ENCODE measurements at regions of chr19 and their contacts with region 1.

Region 1: GRCh38 chr19:40570313-40571004 is 6.2 kb upstream of the SHKBP1 start:
- H3K4me3 ChIP-seq: peak overlapping the region; percentile 35
- H3K27ac ChIP-seq: peak overlapping the region; percentile 73
- H3K4me1 ChIP-seq: peaks cover 16% of the 10 kb centered on the region
- CTCF ChIP-seq: peak; percentile 99

Region 2: DNA sequence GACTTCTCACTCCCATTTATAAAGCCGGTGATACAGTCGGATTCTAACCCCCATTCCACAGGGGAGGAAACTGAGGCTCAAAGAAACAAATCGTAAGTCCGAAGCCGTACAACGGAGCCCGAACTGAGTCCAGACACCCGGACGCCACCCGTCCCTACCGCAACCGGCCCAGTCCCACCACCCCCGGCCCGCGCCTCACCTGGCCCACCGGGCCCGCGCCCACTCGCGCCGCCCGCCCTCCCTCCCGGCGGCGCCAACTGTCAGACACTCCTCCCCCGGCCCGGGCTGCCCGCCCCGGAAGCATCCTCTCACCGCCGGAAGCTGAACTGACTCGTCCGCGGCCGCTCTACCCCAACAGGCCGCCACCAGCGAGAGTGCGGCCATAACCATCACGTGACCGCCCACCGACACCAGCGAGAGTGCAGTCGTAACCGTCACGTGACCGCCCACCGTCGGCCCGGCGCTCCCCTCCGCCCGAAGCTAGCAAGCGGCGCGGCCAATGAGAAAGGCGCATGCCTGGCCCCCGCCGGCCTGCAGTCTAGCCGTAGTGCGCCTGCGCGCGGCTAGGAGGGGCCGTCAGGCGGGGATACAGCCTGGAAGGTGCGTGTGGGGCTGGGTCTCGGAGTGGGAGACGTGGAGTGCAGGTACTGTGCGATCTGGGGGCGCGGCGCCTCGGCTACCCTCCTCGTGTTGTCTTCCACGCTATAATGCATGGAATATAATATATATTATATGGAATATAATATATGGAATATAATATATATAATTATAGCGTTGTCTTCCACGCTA is 222.1 kb before region 1 on chr19 and contains the starts of genes C19orf47 and PLD3:
- CTCF ChIA-PET with region 1: interaction called, 3 read pairs
- POLR2A ChIA-PET with region 1: interaction called, 11 read pairs
- H3K4me3 ChIP-seq: peak within 1 kb of the TSS; percentile 71
- H3K27ac ChIP-seq: peak within 1 kb of the TSS; percentile 73
- H3K4me1 ChIP-seq: peaks cover 8% of the 10 kb centered on the region
- CTCF ChIP-seq: peak; percentile 22; the same call in 1 of the 2 replicates

Region 3: GRCh38 chr19:40529093-40529954 is 41.1 kb before region 1 on chr19:
- CTCF ChIA-PET with region 1: interaction called, 18 read pairs
- POLR2A ChIA-PET with region 1: interaction called, 12 read pairs
- H3K4me3 ChIP-seq: peak overlapping the region; percentile 19
- H3K27ac ChIP-seq: peak overlapping the region; percentile 39
- H3K4me1 ChIP-seq: peaks cover 17% of the 10 kb centered on the region
- CTCF ChIP-seq: peak; percentile 100

Region 4: GRCh38 chr19:40549007-40549708 is 21.3 kb before region 1 on chr19:
- CTCF ChIA-PET with region 1: interaction called, 132 read pairs
- POLR2A ChIA-PET with region 1: interaction called, 24 read pairs
- H3K4me3 ChIP-seq: peak overlapping the region; percentile 2
- H3K27ac ChIP-seq: no peak overlapping the region
- H3K4me1 ChIP-seq: peaks cover 9% of the 10 kb centered on the region
- CTCF ChIP-seq: peak; percentile 98

Region 5: DNA sequence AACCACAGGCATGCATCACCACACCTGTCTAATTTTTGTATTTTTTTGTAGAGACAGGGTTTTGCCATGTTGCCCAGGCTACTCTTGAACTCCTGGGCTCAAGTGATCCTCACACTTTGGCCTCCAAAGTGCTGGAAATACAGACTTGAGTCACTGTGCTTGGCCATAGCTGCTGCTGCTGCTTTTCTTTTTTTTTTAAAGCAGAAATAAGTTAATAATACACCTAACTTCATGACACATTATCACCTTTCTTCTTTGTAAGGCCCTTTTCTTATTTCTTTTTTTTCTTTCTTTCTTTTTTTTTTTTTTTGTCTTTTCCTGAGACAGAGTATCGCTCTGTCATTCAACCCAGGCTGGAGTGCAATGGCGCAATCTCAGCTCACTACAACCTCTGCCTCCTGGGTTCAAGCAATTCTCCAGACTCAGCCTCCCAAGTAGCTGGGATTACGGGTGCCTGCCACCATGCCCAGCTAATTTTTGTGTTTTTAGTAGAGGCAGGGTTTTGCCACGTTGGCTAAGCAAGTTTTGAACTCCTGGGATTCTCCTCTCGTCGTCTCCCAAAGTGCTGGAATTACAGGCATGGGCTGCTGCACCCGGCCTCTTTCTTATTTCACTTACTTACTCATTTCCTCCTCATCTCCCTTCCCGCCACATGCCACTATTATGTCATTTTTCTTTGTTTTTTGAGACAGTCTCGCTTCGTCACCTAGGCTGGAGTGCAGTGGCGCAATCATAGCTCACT is 15.0 kb after region 1 on chr19:
- CTCF ChIA-PET with region 1: interaction called, 15 read pairs
- POLR2A ChIA-PET with region 1: interaction called, 7 read pairs
- H3K4me3 ChIP-seq: no peak overlapping the region
- H3K27ac ChIP-seq: no peak overlapping the region; the same call in 1 of the 2 replicates
- H3K4me1 ChIP-seq: no peaks in the 10 kb centered on the region; the same call in 1 of the 2 replicates
- CTCF ChIP-seq: no peak

Region 6: GRCh38 chr19:40598121-40598917 is 27.9 kb after region 1 on chr19:
- CTCF ChIA-PET with region 1: interaction called, 110 read pairs
- POLR2A ChIA-PET with region 1: interaction called, 35 read pairs
- H3K4me3 ChIP-seq: peak overlapping the region; percentile 33
- H3K27ac ChIP-seq: peak overlapping the region; percentile 60; the same call in 1 of the 2 replicates
- H3K4me1 ChIP-seq: peaks cover 57% of the 10 kb centered on the region
- CTCF ChIP-seq: peak; percentile 99

Measured in HEK293 (cell line).